Caco-2 (cell line): ENCODE measurements at regions of chr4 and their contacts with region 1.

Region 1: DNA sequence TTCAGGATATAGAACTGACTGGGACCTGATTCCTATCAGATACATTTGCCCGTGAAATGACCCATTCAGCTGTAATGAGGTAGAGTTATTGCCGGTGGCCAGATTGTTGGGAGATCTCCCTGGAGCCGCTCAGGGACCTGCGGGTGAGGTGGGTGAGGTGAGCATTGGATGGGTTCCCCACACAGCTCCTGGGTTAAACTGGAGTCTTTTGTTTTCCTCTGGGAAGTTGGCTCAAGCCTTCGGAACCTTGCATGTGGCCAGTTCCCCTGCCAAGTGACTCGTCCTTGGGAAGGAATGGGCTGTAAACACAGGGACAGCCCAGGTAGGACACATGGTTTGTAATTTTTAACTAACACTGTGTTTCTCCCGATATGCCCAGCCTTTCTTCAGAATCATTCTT is 31.6 kb upstream of the KIT start:
- DNase-seq: no peak
- H3K4me3 ChIP-seq: no peak overlapping the region
- H3K4me3 Mint-ChIP-seq: no peak overlapping the region
- H3K27ac Mint-ChIP-seq: no peak overlapping the region
- H3K4me1 ChIP-seq: no peaks in the 10 kb centered on the region
- H3K4me1 Mint-ChIP-seq: peaks cover 10% of the 10 kb centered on the region
- H3K27me3 ChIP-seq: no peaks in the 10 kb centered on the region
- H3K27me3 Mint-ChIP-seq: no peaks in the 10 kb centered on the region
- CTCF ChIP-seq: no peak

Region 2: DNA sequence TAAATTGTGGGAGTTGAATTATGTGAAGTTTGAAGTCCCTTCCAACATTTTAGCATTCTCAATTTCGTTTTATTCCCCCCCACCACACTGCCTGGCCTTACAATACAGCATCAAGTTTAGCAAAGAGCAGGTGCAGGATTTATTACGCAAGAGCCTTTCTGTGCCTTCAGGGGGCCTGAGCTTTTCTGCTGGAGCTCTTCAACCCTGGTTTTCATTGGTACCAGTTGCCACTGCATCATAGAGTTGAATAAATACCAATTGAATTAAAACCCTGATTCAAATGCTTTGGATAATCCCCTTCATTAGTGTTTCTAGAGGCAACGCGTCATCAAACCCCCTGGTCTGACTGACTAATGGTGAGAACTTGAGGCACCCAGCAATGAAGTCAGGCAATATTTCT is 12.0 kb before region 1 on chr4:
- CTCF ChIA-PET with region 1: no interaction called
- POLR2A ChIA-PET with region 1: no interaction called
- intact Hi-C with region 1: loop called (anchors 1 kb)
- DNase-seq: no peak
- H3K4me3 ChIP-seq: no peak overlapping the region
- H3K4me3 Mint-ChIP-seq: no peak overlapping the region
- H3K27ac Mint-ChIP-seq: no peak overlapping the region
- H3K4me1 ChIP-seq: no peaks in the 10 kb centered on the region; the same call in 1 of the 2 replicates
- H3K4me1 Mint-ChIP-seq: peaks cover 12% of the 10 kb centered on the region
- H3K27me3 ChIP-seq: no peaks in the 10 kb centered on the region
- H3K27me3 Mint-ChIP-seq: no peaks in the 10 kb centered on the region
- CTCF ChIP-seq: no peak